IMR-90 (cell line): ENCODE measurements at regions of chr4 and their contacts with region 1.

Region 1: DNA sequence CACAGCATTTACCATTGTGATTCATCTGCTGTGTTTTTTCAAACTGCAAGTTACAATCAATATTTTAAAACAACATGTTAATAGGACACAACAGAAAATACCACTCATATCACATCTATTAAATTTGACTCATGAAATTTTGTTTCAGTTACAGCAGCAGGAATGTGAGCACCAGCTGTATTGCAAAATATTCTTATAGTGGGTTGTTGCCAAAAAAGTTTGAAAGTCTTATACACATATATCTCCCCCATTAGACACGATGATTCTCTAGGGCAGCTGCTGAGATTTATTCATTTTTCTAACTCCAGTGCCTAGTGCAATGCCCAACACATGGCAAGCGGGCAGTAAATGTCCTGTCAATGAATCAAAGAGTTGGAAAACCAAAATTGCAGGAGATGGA is 26.6 kb upstream of the NKX3-2 start:
- DNase-seq: no peak
- ATAC-seq: peak; percentile 44; the same call in 1 of the 2 replicates
- H3K4me3 ChIP-seq: no peak overlapping the region
- H3K27ac ChIP-seq: no peak overlapping the region
- H3K4me1 ChIP-seq: no peaks in the 10 kb centered on the region
- H3K27me3 ChIP-seq: no peaks in the 10 kb centered on the region
- CTCF ChIP-seq: no peak
- POLR2A ChIP-seq: no peak
- RAD21 ChIP-seq: no peak

Region 2: DNA sequence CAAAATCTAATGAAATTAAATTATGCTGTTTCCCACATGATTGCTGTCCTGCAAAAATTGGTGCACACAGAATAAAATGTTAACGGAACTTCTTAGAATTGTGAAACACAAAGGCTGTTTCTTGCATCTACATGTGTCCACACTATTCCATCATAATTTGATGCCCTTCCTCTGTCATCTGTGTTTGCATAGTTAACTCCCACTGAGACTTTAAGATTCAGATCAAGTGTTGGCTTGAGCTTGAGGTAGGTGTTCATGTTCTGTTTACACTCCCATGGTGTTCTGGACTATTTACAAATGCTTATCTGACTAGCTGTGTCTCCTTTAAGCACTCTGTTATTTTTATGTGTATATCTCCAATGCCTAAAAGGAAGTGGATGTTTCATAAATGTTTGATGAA is 709.6 kb before region 1 on chr4:
- CTCF ChIA-PET with region 1: no interaction called
- POLR2A ChIA-PET with region 1: no interaction called
- dilution Hi-C with region 1: no loop called
- in situ Hi-C with region 1: no loop called
- intact Hi-C with region 1: no loop called
- DNase-seq: no peak
- ATAC-seq: no peak
- H3K4me3 ChIP-seq: no peak overlapping the region
- H3K27ac ChIP-seq: no peak overlapping the region
- H3K4me1 ChIP-seq: no peaks in the 10 kb centered on the region
- H3K27me3 ChIP-seq: no peaks in the 10 kb centered on the region
- CTCF ChIP-seq: no peak
- POLR2A ChIP-seq: no peak
- RAD21 ChIP-seq: no peak

Region 3: DNA sequence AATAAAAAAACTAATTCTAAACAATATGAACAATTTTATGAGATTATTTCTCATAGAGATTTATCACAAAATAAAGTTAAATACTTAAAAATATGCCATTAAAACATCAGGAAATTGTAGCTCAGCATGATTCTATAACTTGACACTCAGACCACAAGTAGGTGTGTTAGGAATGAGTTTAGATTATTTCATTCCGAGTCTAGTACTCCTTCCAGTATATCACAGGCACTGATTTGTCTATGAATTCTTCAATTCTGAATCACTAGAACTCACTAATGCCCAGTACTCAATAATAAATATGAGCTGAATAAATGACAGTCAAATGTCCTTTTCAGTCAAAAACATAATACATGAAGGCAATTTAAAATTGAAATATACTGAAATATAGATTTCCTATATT is 34.4 kb after region 1 on chr4:
- CTCF ChIA-PET with region 1: no interaction called
- POLR2A ChIA-PET with region 1: no interaction called
- dilution Hi-C with region 1: no loop called
- in situ Hi-C with region 1: no loop called
- intact Hi-C with region 1: loop called (anchors 5 kb)
- DNase-seq: peak; percentile 50
- ATAC-seq: peak; percentile 81
- H3K4me3 ChIP-seq: no peak overlapping the region
- H3K27ac ChIP-seq: no peak overlapping the region
- H3K4me1 ChIP-seq: no peaks in the 10 kb centered on the region
- H3K27me3 ChIP-seq: no peaks in the 10 kb centered on the region
- CTCF ChIP-seq: no peak
- POLR2A ChIP-seq: no peak
- RAD21 ChIP-seq: no peak

Region 4: GRCh38 chr4:13750594-13750993 is 179.7 kb after region 1 on chr4:
- CTCF ChIA-PET with region 1: no interaction called
- POLR2A ChIA-PET with region 1: no interaction called
- dilution Hi-C with region 1: no loop called
- in situ Hi-C with region 1: no loop called
- intact Hi-C with region 1: no loop called
- DNase-seq: no peak
- ATAC-seq: no peak
- H3K4me3 ChIP-seq: no peak overlapping the region
- H3K27ac ChIP-seq: no peak overlapping the region
- H3K4me1 ChIP-seq: no peaks in the 10 kb centered on the region
- H3K27me3 ChIP-seq: no peaks in the 10 kb centered on the region; the same call in 1 of the 2 replicates
- CTCF ChIP-seq: no peak
- POLR2A ChIP-seq: no peak
- RAD21 ChIP-seq: no peak